PC-3 (cell line): ENCODE measurements at regions of chr12 and their contacts with region 1.

Region 1: GRCh38 chr12:110134691-110135411 is 10.7 kb downstream of the IFT81 start:
- DNase-seq: peak; percentile 44
- ATAC-seq: peak; percentile 96
- H3K4me3 ChIP-seq: no peak overlapping the region
- H3K27ac ChIP-seq: no peak overlapping the region
- H3K4me1 ChIP-seq: no peaks in the 10 kb centered on the region
- H3K27me3 ChIP-seq: no peaks in the 10 kb centered on the region
- CTCF ChIP-seq: no peak

Region 2: DNA sequence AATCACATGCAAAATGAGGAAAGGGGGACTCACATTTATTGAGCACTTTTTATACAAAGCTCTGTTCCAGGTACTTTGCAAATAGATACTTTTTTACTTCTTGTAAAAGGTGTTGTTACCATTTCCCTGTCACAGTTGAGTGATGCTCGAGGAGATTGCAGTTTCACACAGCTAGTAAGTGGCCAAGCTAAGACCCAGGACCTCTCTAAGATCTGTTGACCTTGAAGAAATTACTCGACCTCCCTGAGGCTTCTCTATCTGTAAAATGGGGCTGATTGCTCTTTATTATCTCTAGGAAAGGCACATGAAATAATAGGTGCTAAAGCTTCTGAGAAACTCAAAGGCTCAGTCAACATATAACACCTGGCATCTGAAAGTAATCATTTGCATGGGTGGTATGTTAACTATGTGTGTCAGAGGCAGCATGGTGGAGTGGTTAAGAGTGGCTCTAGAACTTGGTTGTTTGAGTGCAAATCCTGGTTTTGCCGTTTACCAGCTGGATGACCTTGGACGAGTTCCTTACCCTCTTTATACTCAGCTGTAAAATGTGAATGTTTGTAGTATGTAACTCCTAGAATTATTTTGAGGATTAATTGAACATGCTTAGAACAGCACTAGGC is 30.8 kb after region 1 on chr12:
- CTCF ChIA-PET with region 1: no interaction called
- POLR2A ChIA-PET with region 1: no interaction called
- intact Hi-C with region 1: loop called (anchors 5 kb)
- DNase-seq: no peak
- ATAC-seq: no peak
- H3K4me3 ChIP-seq: no peak overlapping the region
- H3K27ac ChIP-seq: no peak overlapping the region
- H3K4me1 ChIP-seq: no peaks in the 10 kb centered on the region
- H3K27me3 ChIP-seq: no peaks in the 10 kb centered on the region
- CTCF ChIP-seq: no peak

Region 3: DNA sequence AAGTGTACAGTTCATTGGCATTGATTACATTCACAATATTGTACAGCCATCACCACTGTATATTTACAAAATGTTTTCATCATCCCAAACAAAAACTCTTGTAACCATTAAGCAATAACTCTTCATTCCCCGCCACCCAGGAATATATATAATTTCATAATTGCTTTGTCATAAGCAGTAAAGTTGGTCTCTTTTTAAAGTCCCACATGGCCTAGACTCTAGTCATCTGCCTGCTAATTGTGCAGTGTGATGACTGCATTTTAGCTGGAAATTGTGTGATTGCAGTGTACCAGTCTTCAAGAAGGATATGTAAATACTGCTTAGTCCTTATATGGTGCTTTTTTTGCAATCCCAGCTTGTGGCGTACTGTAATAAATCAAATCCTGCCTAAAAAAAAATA is 71.1 kb after region 1 on chr12:
- CTCF ChIA-PET with region 1: no interaction called
- POLR2A ChIA-PET with region 1: no interaction called
- intact Hi-C with region 1: loop called (anchors 2 kb)
- DNase-seq: no peak
- ATAC-seq: no peak
- H3K4me3 ChIP-seq: no peak overlapping the region
- H3K27ac ChIP-seq: no peak overlapping the region
- H3K4me1 ChIP-seq: no peaks in the 10 kb centered on the region
- H3K27me3 ChIP-seq: no peaks in the 10 kb centered on the region
- CTCF ChIP-seq: no peak